ENCODE measurements at regions of chr17 and their contacts with region 1.

Region 1: GRCh38 chr17:66455060-66455459 is 152.6 kb downstream of the PRKCA start:
- DNase-seq: no peak
- ATAC-seq: no peak
- H3K4me3 ChIP-seq: no peak overlapping the region
- H3K27ac ChIP-seq: peak overlapping the region; percentile 9; the same call in 1 of the 2 replicates
- H3K4me1 ChIP-seq: peaks cover 11% of the 10 kb centered on the region
- H3K27me3 ChIP-seq: no peaks in the 10 kb centered on the region
- CTCF ChIP-seq: no peak
- POLR2A ChIP-seq: no peak
- RAD21 ChIP-seq: no peak

Region 2: DNA sequence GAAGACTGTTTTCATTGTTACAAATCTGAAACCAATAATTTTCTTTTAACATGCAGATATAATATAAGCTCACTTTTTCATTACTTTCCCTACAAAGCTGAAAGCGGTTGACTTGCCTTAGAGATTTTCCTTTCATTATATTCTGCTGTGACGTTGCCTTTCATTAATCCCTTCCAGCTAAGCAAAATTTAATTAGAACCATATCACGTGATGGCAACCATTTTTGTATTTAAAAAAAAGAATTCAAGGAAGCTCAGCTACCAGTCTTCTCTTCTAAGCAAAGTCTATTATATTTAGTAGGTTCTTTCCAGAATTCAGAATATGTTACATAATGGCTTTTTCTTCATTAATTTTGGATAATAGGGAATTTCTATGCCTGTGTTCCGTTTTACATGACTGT is 33.8 kb after region 1 on chr17:
- CTCF ChIA-PET with region 1: no interaction called
- POLR2A ChIA-PET with region 1: no interaction called
- dilution Hi-C with region 1: no loop called
- in situ Hi-C with region 1: no loop called
- intact Hi-C with region 1: loop called (anchors 1 kb)
- DNase-seq: no peak
- ATAC-seq: no peak
- H3K4me3 ChIP-seq: no peak overlapping the region
- H3K27ac ChIP-seq: no peak overlapping the region
- H3K4me1 ChIP-seq: peaks cover 11% of the 10 kb centered on the region
- H3K27me3 ChIP-seq: no peaks in the 10 kb centered on the region
- CTCF ChIP-seq: no peak
- POLR2A ChIP-seq: no peak
- RAD21 ChIP-seq: no peak

Measured in IMR-90 (cell line).